ENCODE measurements at regions of chr16 and their contacts with region 1.

Region 1: GRCh38 chr16:83717814-83718213 is 90.0 kb upstream of the HSBP1 start:
- DNase-seq: no peak
- ATAC-seq: no peak
- H3K4me3 ChIP-seq: no peak overlapping the region
- H3K27ac ChIP-seq: no peak overlapping the region
- H3K4me1 ChIP-seq: peaks cover 2 to 3% of the 10 kb centered on the region in 2 donors
- H3K27me3 ChIP-seq: no peaks in the 10 kb centered on the region

Region 2: GRCh38 chr16:83807710-83808572 is 90.1 kb after region 1 on chr16 and contains the start of gene HSBP1:
- intact Hi-C with region 1: loop called in 1 of 2 experiments (anchors 10 kb)
- DNase-seq: peak; percentile 97 to 98
- ATAC-seq: peak; percentile 98
- H3K4me3 ChIP-seq: peak within 1 kb of the TSS; percentile 46 to 66
- H3K27ac ChIP-seq: no peak within 1 kb of the TSS
- H3K4me1 ChIP-seq: peaks cover 0 to 5% of the 10 kb centered on the region in 2 donors
- H3K27me3 ChIP-seq: no peaks in the 10 kb centered on the region
- total RNA-seq, gene HSBP1: 71.0 to 74.3 TPM

Measured in aorta (tissue), 5 donors.